Cardiac septum (tissue), 1 donor: ENCODE measurements at regions of chr1 and their contacts with region 1.

Region 1: GRCh38 chr1:32291708-32292492 is at the start of gene HDAC1:
- DNase-seq: peak; percentile 98
- total RNA-seq, gene HDAC1: 29.9 TPM

Region 2: GRCh38 chr1:32249831-32250525 is 41.9 kb before region 1 on chr1:
- intact Hi-C with region 1: loop called (anchors 2 kb)
- DNase-seq: peak; percentile 83